WTC11 (cell line): ENCODE measurements at regions of chr17 and their contacts with region 1.

Region 1: GRCh38 chr17:77420804-77421629 is 280.2 kb downstream of the SEC14L1 start:
- DNase-seq: peak; percentile 74
- ATAC-seq: peak; percentile 60
- H3K4me3 Mint-ChIP-seq: peak overlapping the region; percentile 48
- H3K27ac Mint-ChIP-seq: peak overlapping the region; percentile 99
- H3K4me1 Mint-ChIP-seq: peaks cover 65% of the 10 kb centered on the region
- H3K27me3 Mint-ChIP-seq: no peaks in the 10 kb centered on the region; the same call in 1 of the 2 replicates
- CTCF ChIP-seq: no peak

Region 2: GRCh38 chr17:77391668-77392375 is 29.2 kb before region 1 on chr17:
- CTCF ChIA-PET with region 1: interaction called, 12 read pairs
- POLR2A ChIA-PET with region 1: interaction called, 8 read pairs
- DNase-seq: peak; percentile 51
- ATAC-seq: peak; percentile 64
- H3K4me3 Mint-ChIP-seq: peak overlapping the region; percentile 41
- H3K27ac Mint-ChIP-seq: peak overlapping the region; percentile 98
- H3K4me1 Mint-ChIP-seq: peaks cover 82% of the 10 kb centered on the region
- H3K27me3 Mint-ChIP-seq: no peaks in the 10 kb centered on the region
- CTCF ChIP-seq: no peak

Region 3: GRCh38 chr17:77400445-77400870 is 20.6 kb before region 1 on chr17:
- CTCF ChIA-PET with region 1: interaction called, 20 read pairs
- POLR2A ChIA-PET with region 1: interaction called, 3 read pairs
- DNase-seq: peak; percentile 67
- ATAC-seq: peak; percentile 84
- H3K4me3 Mint-ChIP-seq: no peak overlapping the region
- H3K27ac Mint-ChIP-seq: peak overlapping the region; percentile 73; the same call in 1 of the 2 replicates
- H3K4me1 Mint-ChIP-seq: peaks cover 28% of the 10 kb centered on the region
- H3K27me3 Mint-ChIP-seq: no peaks in the 10 kb centered on the region
- CTCF ChIP-seq: no peak